A549 (cell line): ENCODE measurements at regions of chr12 and their contacts with region 1.

Region 1: GRCh38 chr12:27179400-27180214 is 64.5 kb upstream of the STK38L start:
- DNase-seq: peak; percentile 60 to 94
- ATAC-seq: peak; percentile 92 to 97
- H3K4me3 ChIP-seq: peak overlapping the region; percentile 23; the same call in 1 of the 3 replicates
- H3K27ac ChIP-seq: peak overlapping the region; percentile 85 to 90
- H3K4me1 ChIP-seq: peaks cover 60% of the 10 kb centered on the region
- CTCF ChIP-seq: no peak
- EP300 ChIP-seq: peak; percentile 55 to 85; a peak in 2 of 5 replicates
- POLR2A ChIP-seq: no peak
- RAD21 ChIP-seq: 0 out of 5 replicates have a peak, but pooled peaks of 1 of the 2 experiments have one; percentile 16

Region 2: DNA sequence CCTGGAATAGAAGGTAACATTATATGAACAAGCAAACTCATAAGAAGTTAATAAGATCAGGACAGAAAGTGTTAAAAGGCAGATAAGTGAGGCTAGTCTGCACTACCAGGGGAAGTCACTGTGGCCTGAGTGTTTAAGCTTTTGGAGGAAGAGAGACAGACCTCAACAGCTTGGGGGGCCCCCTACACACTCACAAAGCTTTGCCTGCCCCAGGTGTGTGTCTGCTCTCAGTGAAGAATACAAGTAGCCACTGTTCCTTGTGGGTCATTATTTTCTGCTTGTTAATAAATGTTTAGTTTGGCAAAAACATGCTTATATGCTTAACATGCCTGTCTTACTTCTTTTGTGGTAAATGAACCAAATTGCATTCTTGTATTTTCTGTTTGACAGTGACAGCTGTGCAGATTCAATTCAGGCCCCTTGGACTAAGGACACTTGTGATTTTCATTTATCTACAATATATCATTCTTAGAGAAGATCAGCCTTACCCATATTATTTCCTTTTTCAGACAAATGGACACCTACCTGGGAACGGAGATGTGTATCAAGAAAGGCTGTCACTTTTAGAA is 46.5 kb before region 1 on chr12:
- CTCF ChIA-PET with region 1: no interaction called
- POLR2A ChIA-PET with region 1: no interaction called
- DNase-seq: no peak
- ATAC-seq: no peak
- H3K4me3 ChIP-seq: no peak overlapping the region
- H3K27ac ChIP-seq: no peak overlapping the region
- H3K4me1 ChIP-seq: no peaks in the 10 kb centered on the region
- CTCF ChIP-seq: no peak
- EP300 ChIP-seq: no peak
- POLR2A ChIP-seq: no peak
- RAD21 ChIP-seq: no peak

Region 3: DNA sequence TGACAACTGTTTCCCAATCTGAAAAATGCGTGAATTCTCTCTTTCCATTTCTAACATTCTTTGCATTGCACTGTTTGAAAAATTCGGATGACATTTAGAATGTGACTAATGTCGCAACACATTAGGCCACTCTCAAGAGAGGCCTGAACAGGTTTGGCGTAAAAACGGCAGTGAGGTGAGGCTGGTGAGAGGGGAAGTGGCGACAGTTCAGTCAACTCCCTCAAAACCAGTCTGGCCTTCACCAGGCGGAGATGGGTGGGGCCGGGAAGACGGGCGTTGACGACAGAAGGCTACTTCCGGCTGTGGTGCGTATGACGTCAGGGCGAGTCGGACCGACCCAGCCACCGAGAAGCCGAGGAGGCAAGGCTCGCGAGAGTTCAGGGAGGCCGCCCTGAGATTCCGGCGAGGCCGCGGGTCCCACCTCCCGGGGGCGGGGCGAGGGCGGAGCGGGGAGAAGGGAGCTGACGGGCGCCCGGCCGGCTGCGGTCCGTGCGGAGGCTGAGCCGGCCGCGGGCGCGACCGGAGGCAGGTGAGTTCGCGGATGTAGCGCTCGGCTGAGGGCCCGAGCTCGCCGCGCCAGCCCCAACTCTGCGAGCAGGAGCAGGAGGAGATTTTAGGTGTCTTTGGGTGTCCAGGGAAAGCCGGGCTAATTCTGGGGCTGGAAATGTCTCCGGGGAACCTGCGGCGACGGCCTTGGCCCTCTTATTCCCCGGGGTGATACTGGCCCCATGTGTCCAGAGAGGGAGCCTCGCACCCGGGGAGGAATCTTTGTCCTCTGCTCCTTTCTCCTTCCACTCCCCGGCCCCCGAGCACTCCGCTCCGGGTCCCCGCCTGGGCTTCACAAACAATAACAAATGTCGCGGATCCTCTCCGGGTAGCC is 64.4 kb after region 1 on chr12 and contains the start of gene STK38L:
- CTCF ChIA-PET with region 1: interaction called, 14 read pairs
- POLR2A ChIA-PET with region 1: interaction called, 18 read pairs
- DNase-seq: peak; percentile 87 to 99
- ATAC-seq: peak; percentile 98 to 100
- H3K4me3 ChIP-seq: peak within 1 kb of the TSS; percentile 83
- H3K27ac ChIP-seq: peak within 1 kb of the TSS; percentile 78 to 89
- H3K4me1 ChIP-seq: peaks cover 11% of the 10 kb centered on the region
- CTCF ChIP-seq: peak; percentile 42; the same call in 1 of the 3 replicates
- EP300 ChIP-seq: no peak
- POLR2A ChIP-seq: peak; percentile 95
- RAD21 ChIP-seq: peak; percentile 58 to 74
- polyA plus RNA-seq, gene STK38L: 24.2 and 32.2 TPM in 2 replicates